K562 (cell line): ENCODE measurements at regions of chr9 and their contacts with region 1.

Region 1: GRCh38 chr9:6412487-6413364 is at the start of gene UHRF2:
- DNase-seq: peak; percentile 87 to 95 (median 90)
- ATAC-seq: peak; percentile 95
- H3K4me3 ChIP-seq: peak within 1 kb of the TSS; percentile 90
- H3K27ac ChIP-seq: peak within 1 kb of the TSS; percentile 88
- H3K4me1 ChIP-seq: peaks cover 9 to 19% of the 10 kb centered on the region in 2 experiments; a peak in 4 of 5 replicates
- H3K27me3 ChIP-seq: no peaks in the 10 kb centered on the region
- CTCF ChIP-seq: peak in 1 of 3 experiments; percentile 34; a peak in 2 of 6 replicates
- EP300 ChIP-seq: 0 out of 2 replicates have a peak, but pooled peaks have one; percentile 20
- POLR2A ChIP-seq: peak; percentile 69
- RAD21 ChIP-seq: no peak
- polyA plus RNA-seq, gene UHRF2: 5.6 to 7.6 TPM

Region 2: GRCh38 chr9:6153425-6153824 is 259.3 kb before region 1 on chr9:
- CTCF ChIA-PET with region 1: no interaction called
- POLR2A ChIA-PET with region 1: no interaction called
- in situ Hi-C with region 1: no loop called
- intact Hi-C with region 1: no loop called
- DNase-seq: no peak
- ATAC-seq: no peak
- H3K4me3 ChIP-seq: no peak overlapping the region
- H3K27ac ChIP-seq: no peak overlapping the region
- H3K4me1 ChIP-seq: no peaks in the 10 kb centered on the region
- H3K27me3 ChIP-seq: no peaks in the 10 kb centered on the region
- CTCF ChIP-seq: no peak
- EP300 ChIP-seq: no peak
- POLR2A ChIP-seq: no peak
- RAD21 ChIP-seq: no peak

Region 3: DNA sequence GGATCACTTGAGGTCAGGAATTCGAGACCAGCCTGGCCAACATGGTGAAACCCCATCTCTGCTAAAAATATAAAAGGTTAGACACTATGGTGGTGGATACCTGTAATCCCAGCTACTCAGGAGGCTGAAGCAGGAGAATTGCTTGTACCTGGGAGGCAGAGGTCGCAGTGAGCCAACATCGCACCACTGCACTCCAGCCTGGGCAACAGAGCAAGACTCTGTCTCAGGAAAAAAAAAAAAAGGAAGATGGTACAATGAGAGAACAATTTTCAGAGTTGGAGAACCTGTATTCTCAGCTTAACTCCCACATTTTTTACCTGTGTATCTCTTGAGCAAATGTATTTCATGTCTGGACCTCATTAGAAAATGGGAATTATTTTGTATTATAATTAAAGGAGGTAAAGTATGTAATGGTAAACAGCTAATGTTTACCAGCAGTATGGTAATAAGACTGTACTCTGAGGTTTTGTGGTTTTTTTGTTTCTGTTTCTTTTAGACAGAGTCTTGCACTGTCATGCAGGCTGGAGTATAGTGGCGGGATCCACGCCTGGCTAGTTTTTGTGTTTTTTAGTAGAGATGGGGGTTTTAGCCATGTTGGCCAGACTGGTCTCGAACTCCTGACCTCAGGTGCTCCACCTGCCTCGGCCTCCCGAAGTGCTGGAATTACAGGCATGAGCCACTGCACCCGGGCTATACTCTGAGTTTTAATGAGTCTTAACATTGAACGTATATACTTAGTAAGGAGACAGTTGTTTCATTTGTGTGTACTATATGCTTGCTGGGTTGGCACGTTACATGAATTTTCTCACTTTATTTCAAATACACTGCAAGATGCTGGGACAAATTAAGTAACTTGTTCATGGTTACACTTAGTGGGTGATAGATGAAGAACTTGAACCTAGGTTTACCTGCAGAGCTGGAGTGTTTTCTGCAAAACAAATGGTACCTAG is 16.5 kb after region 1 on chr9:
- CTCF ChIA-PET with region 1: no interaction called
- POLR2A ChIA-PET with region 1: interaction called, 18 read pairs
- in situ Hi-C with region 1: no loop called
- intact Hi-C with region 1: no loop called
- DNase-seq: no peak
- ATAC-seq: peak; percentile 68
- H3K4me3 ChIP-seq: no peak overlapping the region
- H3K27ac ChIP-seq: no peak overlapping the region
- H3K4me1 ChIP-seq: peaks cover 0 to 5% of the 10 kb centered on the region in 2 experiments; a peak in 3 of 5 replicates
- H3K27me3 ChIP-seq: no peaks in the 10 kb centered on the region
- CTCF ChIP-seq: no peak
- EP300 ChIP-seq: no peak
- POLR2A ChIP-seq: no peak
- RAD21 ChIP-seq: no peak

Region 4: DNA sequence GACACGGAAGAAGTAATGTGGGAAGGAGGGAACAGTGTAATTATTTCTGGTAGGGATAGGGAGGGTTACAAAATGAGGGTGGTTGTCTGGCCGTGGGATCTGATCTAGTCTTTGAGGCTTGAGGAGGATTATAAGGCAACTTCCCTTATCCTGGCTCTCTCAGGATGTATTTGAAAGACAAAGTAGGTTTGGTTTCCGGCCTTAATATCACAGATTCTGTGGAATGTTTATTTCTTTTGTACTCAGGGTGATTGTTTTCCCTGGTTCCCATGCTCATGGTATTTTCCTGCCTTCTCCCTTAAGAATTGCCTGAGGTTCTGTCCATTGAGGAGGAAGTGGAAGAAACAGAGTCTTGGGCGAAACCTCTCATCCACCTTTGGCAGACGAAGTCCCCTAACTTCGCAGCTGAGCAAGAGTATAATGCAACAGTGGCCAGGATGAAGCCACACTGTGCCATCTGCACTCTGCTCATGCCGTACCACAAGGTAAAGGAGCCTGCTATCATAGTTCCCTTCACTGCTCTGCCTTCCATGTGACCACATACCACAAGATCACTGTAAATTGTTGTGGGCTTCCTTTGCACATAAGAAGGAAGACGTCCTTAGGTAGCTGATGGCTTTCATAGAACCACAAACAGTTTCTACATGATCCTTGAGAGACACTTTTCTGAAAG is 598.8 kb after region 1 on chr9:
- CTCF ChIA-PET with region 1: no interaction called
- POLR2A ChIA-PET with region 1: no interaction called
- in situ Hi-C with region 1: no loop called
- intact Hi-C with region 1: no loop called
- DNase-seq: no peak
- ATAC-seq: no peak
- H3K4me3 ChIP-seq: no peak overlapping the region
- H3K27ac ChIP-seq: no peak overlapping the region
- H3K4me1 ChIP-seq: no peaks in the 10 kb centered on the region
- H3K27me3 ChIP-seq: no peaks in the 10 kb centered on the region
- CTCF ChIP-seq: no peak
- EP300 ChIP-seq: no peak
- POLR2A ChIP-seq: no peak
- RAD21 ChIP-seq: no peak